Astrocyte of the cerebellum (primary cell): ENCODE measurements at regions of chr7 and their contacts with region 1.

Region 1: DNA sequence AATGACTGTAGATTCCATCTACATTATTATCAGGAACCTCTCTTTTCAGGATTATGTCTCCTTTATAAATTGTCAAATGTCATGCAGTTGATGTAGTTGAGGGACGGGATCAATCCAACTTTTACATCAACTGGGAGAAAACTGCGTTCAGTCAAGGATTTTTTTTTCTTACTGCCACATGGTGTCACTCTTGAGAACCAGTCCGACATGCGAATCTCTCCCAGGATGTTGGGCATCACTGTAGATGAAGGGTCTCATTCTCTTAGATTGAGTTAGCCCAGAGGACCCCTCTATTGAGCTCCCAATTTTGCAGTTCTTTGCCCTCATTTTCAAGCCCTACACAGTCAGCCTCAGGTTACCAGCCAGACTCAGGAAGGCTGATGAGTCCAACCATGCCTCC is 120.3 kb upstream of the PTPRZ1 start:
- DNase-seq: no peak
- H3K4me3 ChIP-seq: no peak overlapping the region
- CTCF ChIP-seq: peak; percentile 43

Region 2: GRCh38 chr7:121697731-121698316 is 54.9 kb before region 1 on chr7:
- in situ Hi-C with region 1: no loop called
- DNase-seq: no peak
- H3K4me3 ChIP-seq: no peak overlapping the region
- CTCF ChIP-seq: no peak

Region 3: GRCh38 chr7:121916211-121916610 is 163.5 kb after region 1 on chr7:
- in situ Hi-C with region 1: no loop called
- DNase-seq: no peak
- H3K4me3 ChIP-seq: no peak overlapping the region
- CTCF ChIP-seq: no peak

Region 4: DNA sequence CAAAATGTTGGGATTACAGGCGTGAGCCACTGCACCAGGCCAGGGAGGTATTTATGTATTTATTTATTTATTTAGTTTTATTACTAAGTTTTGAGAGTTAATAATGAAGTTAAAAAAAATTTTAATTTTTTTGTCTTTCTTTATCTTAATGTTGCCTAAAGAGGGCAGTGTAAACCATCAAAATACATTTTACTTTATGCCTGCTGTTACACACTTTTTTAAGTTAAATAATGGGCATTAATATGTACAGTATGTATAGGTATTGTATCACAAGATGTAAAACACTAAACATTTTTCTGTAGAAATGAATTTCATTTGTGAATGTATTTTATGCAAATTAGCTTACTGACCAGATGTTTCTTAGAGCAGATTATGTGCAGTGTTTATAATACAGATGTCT is 262.0 kb after region 1 on chr7:
- in situ Hi-C with region 1: loop called (anchors 25 kb)
- DNase-seq: no peak
- H3K4me3 ChIP-seq: no peak overlapping the region
- CTCF ChIP-seq: no peak